Left ventricle myocardium superior (tissue), 1 donor: ENCODE measurements at regions of chr20 and their contacts with region 1.

Region 1: GRCh38 chr20:57596998-57597939 is 23.0 kb downstream of the ZBP1 start:
- DNase-seq: peak; percentile 89
- ATAC-seq: peak; percentile 89

Region 2: GRCh38 chr20:57391074-57391554 is 206.2 kb before region 1 on chr20 and contains the start of gene RBM38:
- intact Hi-C with region 1: no loop called
- DNase-seq: peak; percentile 85
- ATAC-seq: peak; percentile 67
- total RNA-seq, gene RBM38: 89.3 TPM

Region 3: DNA sequence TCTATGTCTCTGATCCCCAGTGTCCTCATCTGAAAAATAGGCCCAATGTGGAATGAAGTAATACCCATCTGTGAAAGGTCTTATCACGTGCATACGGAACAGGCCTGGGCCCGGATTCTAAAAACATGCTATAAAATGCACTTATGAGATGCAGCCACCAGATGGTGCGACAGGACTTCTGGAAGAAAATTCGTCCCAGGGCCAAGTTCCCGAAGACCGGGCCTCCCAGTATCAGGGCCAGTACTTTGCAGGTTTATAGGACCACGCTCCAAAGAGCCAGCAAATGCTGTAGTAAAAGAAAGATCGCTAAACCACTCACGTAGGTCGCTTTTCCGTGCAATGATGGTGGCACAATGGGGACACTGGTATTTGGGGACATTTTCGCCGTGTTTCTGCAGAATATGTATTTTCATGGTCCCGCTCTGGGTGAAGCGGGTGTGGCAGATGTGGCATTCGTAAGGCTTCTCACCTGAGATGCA is 83.0 kb before region 1 on chr20:
- intact Hi-C with region 1: loop called (anchors 2 kb)
- DNase-seq: peak; percentile 63
- ATAC-seq: peak; percentile 88

Region 4: DNA sequence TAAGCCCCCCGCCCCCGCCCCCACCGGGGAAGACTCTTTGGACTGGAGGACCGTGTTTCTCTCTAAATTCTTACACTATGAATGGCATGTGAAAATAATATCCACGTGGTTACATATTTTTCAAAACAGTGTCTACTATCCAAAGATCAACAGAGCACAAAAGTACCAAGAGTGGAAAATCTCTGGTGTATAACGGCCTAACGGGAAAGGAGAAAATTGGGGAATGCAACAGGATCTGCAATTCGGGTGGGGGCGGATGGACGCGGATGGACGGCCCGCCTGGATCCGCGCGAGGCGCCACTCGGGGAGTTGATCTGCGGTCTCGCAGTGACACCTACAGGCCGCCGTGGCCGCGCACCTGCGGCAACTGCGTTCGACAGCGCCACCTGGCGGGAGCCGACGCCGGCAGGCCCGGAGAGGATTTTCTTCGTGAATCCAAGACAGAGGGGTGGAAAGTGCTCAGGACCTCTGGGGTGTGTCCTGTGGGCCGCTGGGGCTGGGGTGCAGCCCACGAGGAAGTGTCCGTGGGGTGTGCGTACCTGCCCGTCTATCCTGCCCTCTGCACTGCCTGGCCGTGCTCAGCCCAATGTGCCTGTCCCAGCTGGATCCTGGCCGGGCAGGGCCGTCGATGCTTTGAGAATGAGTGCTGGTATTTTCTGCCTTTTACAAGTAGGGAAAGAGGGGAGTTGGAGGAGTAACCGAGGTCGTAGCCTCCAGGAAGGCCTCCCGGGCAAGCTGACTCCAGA is 612.6 kb after region 1 on chr20:
- intact Hi-C with region 1: loop called (anchors 5 kb)
- DNase-seq: peak; percentile 93
- ATAC-seq: peak; percentile 92